ENCODE measurements at regions of chr6 and their contacts with region 1.

Region 1: DNA sequence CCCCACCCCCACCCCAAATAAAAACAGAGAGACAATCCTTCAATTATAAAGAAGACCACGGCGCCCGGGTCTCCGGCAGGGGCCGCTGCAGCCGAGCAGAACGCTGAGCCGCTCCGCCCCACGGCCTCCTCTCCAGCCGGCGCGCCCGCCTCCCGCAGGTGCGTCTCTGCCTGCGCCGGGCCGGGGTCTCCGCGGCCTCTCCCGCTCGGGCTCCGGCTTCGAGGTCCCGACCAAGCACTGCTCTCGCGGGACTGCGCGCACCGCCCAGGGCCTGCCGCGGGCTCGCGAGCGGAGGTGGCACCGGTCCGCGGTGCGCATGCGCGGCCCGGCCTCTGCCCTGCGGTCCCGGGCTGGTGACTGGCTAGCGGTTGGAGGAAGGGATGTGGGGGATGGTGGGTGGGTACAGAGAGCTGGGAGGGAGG is 241 bp upstream of the SIRT5 start:
- DNase-seq: peak; percentile 91
- H3K4me3 Mint-ChIP-seq: peak overlapping the region; percentile 92
- H3K27ac Mint-ChIP-seq: peak overlapping the region; percentile 97
- H3K4me1 Mint-ChIP-seq: peaks cover 19% of the 10 kb centered on the region
- H3K27me3 Mint-ChIP-seq: no peaks in the 10 kb centered on the region

Region 2: GRCh38 chr6:13194852-13195251 is 379.3 kb before region 1 on chr6:
- CTCF ChIA-PET with region 1: no interaction called
- intact Hi-C with region 1: loop called (anchors 10 kb)
- DNase-seq: peak; percentile 49
- H3K4me3 Mint-ChIP-seq: no peak overlapping the region
- H3K27ac Mint-ChIP-seq: no peak overlapping the region
- H3K4me1 Mint-ChIP-seq: no peaks in the 10 kb centered on the region
- H3K27me3 Mint-ChIP-seq: peaks cover 9% of the 10 kb centered on the region

Region 3: DNA sequence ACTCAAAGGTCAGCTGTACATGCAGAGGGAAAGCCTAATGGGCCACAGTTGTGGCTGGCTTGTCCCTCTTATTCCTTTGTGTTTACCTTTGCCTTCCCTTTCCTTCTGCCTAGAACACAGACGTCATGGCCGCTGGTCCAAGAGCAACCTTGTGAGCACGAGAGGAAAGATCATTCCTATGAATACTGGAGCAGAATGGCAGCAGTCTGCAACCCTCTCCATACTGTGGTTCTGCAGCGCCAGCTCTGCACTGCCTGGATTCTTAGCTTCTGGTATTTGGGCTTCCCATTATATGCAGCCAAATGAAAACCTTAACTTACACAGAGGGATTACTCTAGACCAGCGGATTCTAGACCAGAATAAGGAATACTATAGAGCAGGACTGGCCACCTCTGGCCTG is 258.3 kb before region 1 on chr6:
- CTCF ChIA-PET with region 1: no interaction called
- intact Hi-C with region 1: no loop called
- DNase-seq: no peak
- H3K4me3 Mint-ChIP-seq: no peak overlapping the region
- H3K27ac Mint-ChIP-seq: no peak overlapping the region
- H3K4me1 Mint-ChIP-seq: no peaks in the 10 kb centered on the region
- H3K27me3 Mint-ChIP-seq: no peaks in the 10 kb centered on the region

Region 4: DNA sequence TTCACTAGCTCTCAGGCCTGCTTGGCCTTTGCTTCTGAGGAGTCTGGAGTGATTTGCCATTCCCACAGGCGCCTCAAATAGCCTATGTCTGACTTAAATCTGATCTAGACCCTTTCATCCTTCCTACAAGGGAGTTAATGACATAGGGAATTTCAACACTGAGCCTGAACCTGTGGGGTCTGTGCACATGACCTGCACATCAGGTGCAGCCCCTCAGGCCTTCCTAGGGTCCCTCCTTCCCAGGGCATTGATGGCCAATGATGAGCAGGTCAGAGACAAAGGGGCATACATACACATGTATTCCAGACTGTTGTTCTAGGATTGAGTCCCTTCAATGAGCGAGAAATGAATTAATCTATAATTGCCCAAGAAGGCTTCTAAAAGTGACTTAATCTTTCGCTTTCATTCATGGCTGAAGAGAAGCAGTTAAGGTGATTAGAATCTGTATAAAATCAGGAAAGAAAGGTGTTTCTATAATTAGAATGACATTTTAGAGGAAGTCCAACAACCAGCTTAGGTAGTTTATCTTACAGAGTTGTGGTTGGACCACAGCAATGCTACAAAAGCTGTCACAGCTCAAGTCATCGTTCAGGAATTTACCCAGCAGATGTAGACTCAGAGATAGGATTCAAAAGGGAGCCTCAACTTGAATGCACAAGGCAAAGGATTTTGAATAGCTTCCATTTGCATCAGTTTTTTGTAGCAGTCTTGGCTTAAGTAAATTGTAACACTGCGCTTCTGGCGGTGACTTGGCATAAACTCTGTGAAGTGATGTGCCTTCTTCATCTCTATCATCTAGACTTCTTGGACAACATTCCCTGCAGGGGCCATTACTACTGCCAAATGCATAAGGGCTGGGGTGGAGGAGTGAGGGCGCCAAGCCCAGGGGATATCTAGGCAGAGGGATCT is 218.9 kb before region 1 on chr6:
- CTCF ChIA-PET with region 1: interaction called, 3 read pairs
- intact Hi-C with region 1: loop called (anchors 1 kb)
- DNase-seq: peak; percentile 70
- H3K4me3 Mint-ChIP-seq: peak overlapping the region; percentile 63
- H3K27ac Mint-ChIP-seq: peak overlapping the region; percentile 99
- H3K4me1 Mint-ChIP-seq: peaks cover 45% of the 10 kb centered on the region
- H3K27me3 Mint-ChIP-seq: no peaks in the 10 kb centered on the region

Region 5: DNA sequence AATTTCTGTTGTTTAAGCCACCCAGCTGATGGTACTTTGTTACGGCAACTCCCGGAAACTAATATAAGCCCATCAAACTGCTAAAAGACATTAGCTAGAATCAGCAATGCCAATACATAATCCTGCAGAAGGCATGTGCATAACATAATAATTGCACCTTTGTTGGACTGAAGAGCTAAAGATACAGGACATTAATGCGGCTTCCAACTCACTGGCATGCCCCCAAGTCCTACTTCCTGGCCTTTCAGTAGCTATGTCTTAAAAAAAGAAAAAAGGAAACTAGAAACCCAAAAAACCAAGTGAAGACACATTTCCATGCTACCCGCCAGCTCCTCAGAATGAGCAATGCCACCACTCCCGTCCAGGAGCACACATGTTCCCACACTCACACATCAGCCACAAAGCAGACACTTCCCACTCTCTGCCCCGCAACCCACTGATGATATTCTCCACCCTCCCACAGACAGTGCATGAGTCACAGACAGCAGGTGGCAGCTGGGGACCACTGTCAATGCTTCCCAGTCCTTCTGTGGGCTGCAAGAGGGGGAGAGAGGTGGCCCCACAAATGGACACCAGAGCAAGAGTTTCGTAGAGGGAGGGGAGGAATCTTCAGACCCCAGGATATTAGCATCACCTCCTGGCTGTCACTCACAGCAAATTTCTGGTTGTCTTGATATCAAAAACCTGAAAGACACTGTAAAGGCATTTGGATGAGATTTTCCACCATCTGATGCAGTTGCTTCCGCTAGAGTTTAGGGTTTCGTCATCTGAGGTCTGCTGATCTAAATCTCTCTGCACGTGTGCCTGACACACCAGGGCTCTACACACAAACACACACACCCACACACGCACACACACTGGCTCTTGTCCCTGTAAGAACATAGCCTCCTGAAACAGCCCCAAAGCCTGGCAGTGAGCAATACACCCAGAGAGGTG is 119.6 kb before region 1 on chr6:
- CTCF ChIA-PET with region 1: interaction called, 5 read pairs
- intact Hi-C with region 1: loop called (anchors 1 kb)
- DNase-seq: peak; percentile 86
- H3K4me3 Mint-ChIP-seq: peak overlapping the region; percentile 46
- H3K27ac Mint-ChIP-seq: peak overlapping the region; percentile 93
- H3K4me1 Mint-ChIP-seq: peaks cover 45% of the 10 kb centered on the region
- H3K27me3 Mint-ChIP-seq: no peaks in the 10 kb centered on the region

Region 6: DNA sequence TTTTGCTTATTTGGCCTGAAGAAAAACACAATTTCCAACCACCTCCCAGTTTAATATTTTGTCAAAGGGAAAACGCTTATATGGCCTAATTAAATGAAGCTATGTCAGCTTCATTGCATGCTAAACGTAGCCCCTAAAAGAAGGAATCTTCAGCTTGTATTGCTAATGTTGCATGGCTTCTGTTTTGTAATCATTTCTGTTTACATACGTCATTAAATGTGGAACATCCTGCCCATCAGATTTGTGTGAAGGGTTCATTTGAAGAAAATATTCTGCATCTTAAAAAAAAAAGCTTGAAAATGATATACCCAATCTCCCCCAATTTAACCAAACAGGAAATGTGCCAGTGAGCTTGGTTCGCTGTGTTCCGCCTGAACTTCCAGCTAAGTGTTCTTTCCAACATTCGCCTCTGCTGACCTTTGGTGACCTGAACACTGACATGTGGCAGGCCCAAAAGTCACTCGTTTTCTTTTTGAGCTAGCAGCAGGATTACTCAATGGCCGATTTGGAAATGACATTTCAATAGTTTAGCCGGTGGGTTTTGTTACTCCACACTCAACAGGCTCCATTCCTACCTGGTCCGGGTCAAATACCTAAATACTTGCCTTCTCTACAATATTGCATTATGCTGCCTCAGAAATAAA is 12.4 kb before region 1 on chr6:
- CTCF ChIA-PET with region 1: interaction called, 45 read pairs
- intact Hi-C with region 1: no loop called
- DNase-seq: no peak
- H3K4me3 Mint-ChIP-seq: no peak overlapping the region
- H3K27ac Mint-ChIP-seq: no peak overlapping the region
- H3K4me1 Mint-ChIP-seq: no peaks in the 10 kb centered on the region
- H3K27me3 Mint-ChIP-seq: no peaks in the 10 kb centered on the region

Region 7: GRCh38 chr6:13767121-13767808 is 193.1 kb after region 1 on chr6:
- CTCF ChIA-PET with region 1: no interaction called
- intact Hi-C with region 1: loop called (anchors 1 kb)
- DNase-seq: peak; percentile 71
- H3K4me3 Mint-ChIP-seq: peak overlapping the region; percentile 78
- H3K27ac Mint-ChIP-seq: no peak overlapping the region
- H3K4me1 Mint-ChIP-seq: peaks cover 43% of the 10 kb centered on the region
- H3K27me3 Mint-ChIP-seq: peaks cover 1% of the 10 kb centered on the region

Region 8: DNA sequence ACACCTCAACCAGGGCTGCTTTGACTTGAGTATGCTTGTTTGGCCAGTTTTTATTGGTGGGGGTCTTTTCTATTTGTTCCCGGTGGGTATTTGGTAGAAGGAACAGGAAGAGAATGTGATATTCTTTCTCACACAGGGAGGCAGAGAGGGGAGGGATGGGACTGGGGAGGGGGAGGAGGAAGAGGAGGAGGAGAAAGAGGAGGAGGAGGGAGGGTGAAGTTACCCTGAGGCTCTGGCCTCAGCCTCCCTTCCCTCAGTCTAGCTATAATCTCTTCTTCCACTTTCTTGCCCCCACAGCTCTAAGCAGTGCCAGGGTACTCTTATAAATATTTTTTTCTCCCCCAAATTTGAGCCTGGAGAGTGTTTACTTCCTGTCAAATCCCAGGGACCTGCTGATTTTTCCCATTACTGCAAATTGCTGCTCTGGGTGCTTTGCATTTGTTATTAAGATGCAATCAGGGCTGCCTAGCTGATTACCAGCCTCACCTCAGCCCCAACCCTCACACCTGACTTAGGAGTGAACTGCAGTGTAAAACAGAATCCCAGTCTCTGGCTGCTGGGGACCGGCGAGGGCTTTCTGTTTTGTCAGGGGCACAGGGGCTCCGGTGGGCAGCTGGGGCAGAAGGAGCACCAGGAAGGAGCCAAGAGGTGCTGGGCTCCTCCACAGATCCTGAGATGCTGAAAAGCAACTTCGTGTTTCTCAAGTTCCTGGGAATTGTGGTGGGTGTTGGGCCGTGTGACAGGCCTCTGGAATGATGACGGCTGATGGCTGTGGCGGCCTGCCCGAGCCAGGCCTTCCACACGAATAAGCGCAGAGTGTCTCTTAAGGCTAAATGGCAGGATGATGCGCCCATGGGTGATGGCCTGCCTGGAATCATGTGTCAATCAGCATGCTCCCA is 684.8 kb after region 1 on chr6:
- CTCF ChIA-PET with region 1: no interaction called
- intact Hi-C with region 1: no loop called
- DNase-seq: no peak
- H3K4me3 Mint-ChIP-seq: no peak overlapping the region
- H3K27ac Mint-ChIP-seq: no peak overlapping the region
- H3K4me1 Mint-ChIP-seq: peaks cover 2% of the 10 kb centered on the region
- H3K27me3 Mint-ChIP-seq: no peaks in the 10 kb centered on the region